Activated CD4-positive, alpha-beta T cell treated with anti-CD3 and anti-CD28 coated beads, Interleukin-2, amount 10 ng/mL, durations not matched to agents 24 days and 14 days (primary cell): ENCODE measurements at regions of chr12 and their contacts with region 1.

Region 1: GRCh38 chr12:24921251-24922038 is 27.5 kb downstream of the BCAT1 start:
- DNase-seq: no peak
- H3K4me3 Mint-ChIP-seq: peak overlapping the region; percentile 49
- H3K27ac Mint-ChIP-seq: peak overlapping the region; percentile 81
- H3K4me1 Mint-ChIP-seq: peaks cover 36% of the 10 kb centered on the region
- H3K27me3 Mint-ChIP-seq: peaks cover 7% of the 10 kb centered on the region

Region 2: DNA sequence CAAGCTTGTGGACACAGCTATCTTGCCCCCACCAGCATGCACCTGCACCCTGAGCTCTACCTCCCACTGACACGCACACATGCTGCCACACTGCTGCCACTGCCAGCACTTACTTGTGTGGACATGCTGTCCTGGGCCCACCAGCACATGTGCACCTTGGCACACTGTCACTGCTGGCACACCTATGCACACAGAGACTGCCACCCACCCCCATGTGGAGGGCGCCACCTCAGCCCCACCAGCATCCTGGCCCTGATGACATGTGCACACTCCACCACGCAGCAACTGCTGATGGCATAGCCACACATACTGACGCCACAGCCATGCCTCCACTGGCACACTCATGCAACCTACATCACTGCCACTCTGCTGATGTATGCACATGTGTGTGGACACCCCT is 1446.9 kb before region 1 on chr12:
- intact Hi-C with region 1: no loop called
- DNase-seq: no peak
- H3K4me3 Mint-ChIP-seq: no peak overlapping the region
- H3K27ac Mint-ChIP-seq: no peak overlapping the region
- H3K4me1 Mint-ChIP-seq: no peaks in the 10 kb centered on the region
- H3K27me3 Mint-ChIP-seq: no peaks in the 10 kb centered on the region

Region 3: GRCh38 chr12:24814379-24815113 is 106.9 kb before region 1 on chr12:
- intact Hi-C with region 1: no loop called
- DNase-seq: no peak
- H3K4me3 Mint-ChIP-seq: peak overlapping the region; percentile 82
- H3K27ac Mint-ChIP-seq: peak overlapping the region; percentile 82
- H3K4me1 Mint-ChIP-seq: peaks cover 20% of the 10 kb centered on the region
- H3K27me3 Mint-ChIP-seq: no peaks in the 10 kb centered on the region

Region 4: DNA sequence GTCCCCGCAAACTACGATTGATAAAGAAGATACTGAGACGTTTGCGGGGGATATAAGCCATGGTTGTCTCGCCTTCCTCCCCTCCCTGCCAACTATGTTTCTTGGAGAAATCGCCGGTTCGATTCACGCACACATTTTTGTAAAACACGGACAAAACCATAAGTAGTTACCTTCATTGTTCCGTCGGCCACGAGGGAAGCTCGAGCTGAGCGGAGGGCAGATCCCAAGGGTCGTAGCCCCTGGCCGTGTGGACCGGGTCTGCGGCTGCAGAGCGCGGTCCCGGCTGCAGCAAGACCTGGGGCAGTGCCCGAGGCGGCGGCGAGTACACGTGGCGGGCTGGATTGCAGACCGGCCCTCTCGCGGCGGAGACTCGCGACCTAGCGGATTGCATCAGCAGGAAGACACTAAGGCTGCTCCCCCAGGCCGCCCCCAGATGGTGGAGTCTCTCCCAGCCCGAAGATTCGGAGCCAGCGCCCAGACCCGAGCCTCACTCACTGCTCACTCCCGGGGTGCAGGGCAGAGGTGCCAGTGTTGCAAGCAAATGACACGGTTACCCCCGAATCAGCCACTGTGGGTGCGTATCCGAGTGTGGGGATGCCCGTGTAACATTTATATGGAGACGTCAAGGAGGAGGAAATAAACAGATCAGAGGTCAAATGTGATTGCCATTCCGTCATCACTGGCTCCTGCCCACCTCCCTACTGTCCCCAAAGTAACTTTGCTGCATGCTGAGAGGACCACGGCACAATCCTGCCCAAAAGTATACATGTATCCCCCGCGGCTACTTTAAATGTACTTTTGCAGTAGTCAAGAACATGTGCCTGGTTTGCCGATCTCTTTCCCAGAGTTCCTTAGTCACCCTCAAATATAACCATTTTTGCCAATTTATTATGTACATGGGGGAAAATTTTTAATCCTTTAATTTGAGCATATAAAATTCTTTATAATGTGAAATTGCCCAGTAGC is 27.6 kb after region 1 on chr12 and contains the start of gene BCAT1:
- intact Hi-C with region 1: loop called (anchors 1 kb)
- DNase-seq: peak; percentile 82
- H3K4me3 Mint-ChIP-seq: peak within 1 kb of the TSS; percentile 92
- H3K27ac Mint-ChIP-seq: peak within 1 kb of the TSS; percentile 93
- H3K4me1 Mint-ChIP-seq: peaks cover 52% of the 10 kb centered on the region
- H3K27me3 Mint-ChIP-seq: peaks cover 8% of the 10 kb centered on the region
- total RNA-seq, gene BCAT1: 49.7 and 51.9 TPM in 2 replicates

Region 5: GRCh38 chr12:24955389-24955788 is 33.9 kb after region 1 on chr12:
- intact Hi-C with region 1: loop called (anchors 1 kb)
- DNase-seq: no peak
- H3K4me3 Mint-ChIP-seq: no peak overlapping the region
- H3K27ac Mint-ChIP-seq: peak overlapping the region; percentile 22
- H3K4me1 Mint-ChIP-seq: peaks cover 36% of the 10 kb centered on the region
- H3K27me3 Mint-ChIP-seq: peaks cover 3% of the 10 kb centered on the region